WTC11 (cell line): ENCODE measurements at regions of chr12 and their contacts with region 1.

Region 1: DNA sequence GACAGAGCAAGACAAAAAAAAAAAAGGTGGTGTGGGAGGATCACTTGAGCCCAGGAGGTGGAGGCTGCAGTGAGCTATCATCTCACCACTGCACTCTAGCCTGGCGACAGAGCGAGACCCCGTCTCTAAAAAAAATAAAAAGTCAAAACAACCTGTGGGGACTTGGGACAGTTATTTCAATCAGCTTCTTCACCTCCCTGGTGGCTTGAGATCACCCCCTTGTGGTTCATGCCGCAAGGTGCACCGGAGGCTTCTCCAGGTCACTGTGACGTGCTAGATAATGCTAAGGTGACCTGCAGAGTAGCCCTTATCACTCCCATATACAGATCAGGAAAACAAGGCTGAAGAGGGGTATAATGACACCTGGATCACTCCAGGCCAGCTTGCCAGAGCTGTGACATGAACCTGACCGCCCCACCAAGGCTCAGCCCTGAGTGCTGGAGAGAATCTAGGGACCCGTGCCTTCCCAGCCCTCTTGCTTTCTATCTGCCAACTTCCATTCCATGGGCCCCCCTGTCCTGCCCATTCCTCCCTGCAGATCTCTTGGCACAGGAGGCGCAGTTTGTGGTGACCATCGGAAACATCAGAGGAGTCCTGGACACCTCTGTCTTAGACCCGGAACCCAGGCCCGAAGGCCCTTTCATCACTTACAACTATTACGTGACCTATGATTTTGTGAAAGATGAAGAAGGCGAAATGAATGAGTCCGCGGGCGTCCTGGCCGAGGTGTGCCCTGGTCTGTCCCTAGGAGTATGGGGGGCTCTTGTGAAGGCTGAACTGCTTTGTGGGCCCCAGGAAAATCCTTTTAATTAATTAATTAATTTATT is 8.1 kb downstream of the LRRC43 start:
- DNase-seq: peak; percentile 86
- ATAC-seq: peak; percentile 88
- H3K4me3 Mint-ChIP-seq: no peak overlapping the region
- H3K27ac Mint-ChIP-seq: no peak overlapping the region
- H3K4me1 Mint-ChIP-seq: 0 out of 2 replicates have a peak, but pooled peaks cover 3% of the 10 kb centered on the region
- H3K27me3 Mint-ChIP-seq: no peaks in the 10 kb centered on the region
- CTCF ChIP-seq: peak; percentile 69

Region 2: DNA sequence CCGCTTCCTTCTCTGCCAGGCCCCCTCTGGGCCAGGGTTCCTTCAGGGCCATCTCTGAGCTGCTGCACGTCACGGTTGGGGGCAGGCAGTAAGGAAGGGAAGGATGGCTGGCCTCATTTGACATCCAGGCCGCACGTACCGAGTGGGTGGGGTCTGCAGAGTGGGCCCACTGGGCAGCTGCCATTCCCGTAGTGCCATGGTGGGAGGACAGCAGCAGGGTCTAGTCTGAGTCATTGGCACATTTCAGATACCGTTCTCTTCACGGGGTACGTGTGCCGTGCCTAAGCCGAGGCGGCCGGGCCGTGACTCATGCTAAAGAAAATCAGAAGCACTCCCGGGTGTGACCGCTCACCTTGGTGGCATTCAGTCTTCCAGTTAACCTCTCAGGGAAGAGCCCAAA is 60.9 kb before region 1 on chr12:
- CTCF ChIA-PET with region 1: interaction called, 10 read pairs
- POLR2A ChIA-PET with region 1: no interaction called
- DNase-seq: no peak
- ATAC-seq: no peak
- H3K4me3 Mint-ChIP-seq: no peak overlapping the region
- H3K27ac Mint-ChIP-seq: no peak overlapping the region; the same call in 1 of the 2 replicates
- H3K4me1 Mint-ChIP-seq: peaks cover 14% of the 10 kb centered on the region
- H3K27me3 Mint-ChIP-seq: no peaks in the 10 kb centered on the region
- CTCF ChIP-seq: no peak

Region 3: GRCh38 chr12:122137681-122138080 is 53.4 kb before region 1 on chr12:
- CTCF ChIA-PET with region 1: interaction called, 32 read pairs
- POLR2A ChIA-PET with region 1: no interaction called
- DNase-seq: peak; percentile 82
- ATAC-seq: peak; percentile 94
- H3K4me3 Mint-ChIP-seq: peak overlapping the region; percentile 24; the same call in 1 of the 2 replicates
- H3K27ac Mint-ChIP-seq: no peak overlapping the region
- H3K4me1 Mint-ChIP-seq: 0 out of 2 replicates have a peak, but pooled peaks cover 6% of the 10 kb centered on the region
- H3K27me3 Mint-ChIP-seq: no peaks in the 10 kb centered on the region
- CTCF ChIP-seq: no peak